Endothelial cell of umbilical vein (primary cell): ENCODE measurements at regions of chr13 and their contacts with region 1.

Region 1: DNA sequence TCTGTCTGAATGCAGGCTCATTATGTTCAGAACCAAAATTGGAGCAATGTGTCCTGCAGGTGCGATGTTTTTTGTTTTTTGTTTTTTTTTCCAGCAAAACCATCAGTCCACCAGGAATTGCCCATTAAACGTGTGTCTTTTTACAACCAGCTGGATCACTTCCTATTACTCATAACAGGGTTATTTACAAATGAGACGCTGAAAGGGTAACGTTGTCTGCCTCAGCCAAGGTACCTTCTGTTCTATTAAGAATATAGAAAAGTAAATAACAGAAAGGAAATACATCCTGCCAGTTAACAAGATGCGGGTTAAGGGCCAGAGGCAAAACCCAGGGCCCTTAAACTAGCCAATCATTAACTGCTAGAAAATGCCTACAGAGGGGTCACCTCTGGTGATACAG is 590.4 kb downstream of the TBC1D4 start:
- DNase-seq: peak; percentile 86
- H3K4me3 ChIP-seq: peak overlapping the region in 1 of 3 experiments; percentile 3
- H3K27ac ChIP-seq: peak overlapping the region; percentile 92
- H3K4me1 ChIP-seq: peaks cover 19% of the 10 kb centered on the region
- H3K27me3 ChIP-seq: no peaks in the 10 kb centered on the region
- CTCF ChIP-seq: no peak
- POLR2A ChIP-seq: no peak

Region 2: GRCh38 chr13:74683411-74683810 is 208.2 kb before region 1 on chr13:
- CTCF ChIA-PET with region 1: no interaction called
- POLR2A ChIA-PET with region 1: no interaction called
- dilution Hi-C with region 1: no loop called
- intact Hi-C with region 1: loop called (anchors 5 kb)
- DNase-seq: peak; percentile 19
- H3K4me3 ChIP-seq: no peak overlapping the region
- H3K27ac ChIP-seq: no peak overlapping the region
- H3K4me1 ChIP-seq: peaks cover 4% of the 10 kb centered on the region
- H3K27me3 ChIP-seq: no peaks in the 10 kb centered on the region
- CTCF ChIP-seq: no peak
- POLR2A ChIP-seq: no peak

Region 3: DNA sequence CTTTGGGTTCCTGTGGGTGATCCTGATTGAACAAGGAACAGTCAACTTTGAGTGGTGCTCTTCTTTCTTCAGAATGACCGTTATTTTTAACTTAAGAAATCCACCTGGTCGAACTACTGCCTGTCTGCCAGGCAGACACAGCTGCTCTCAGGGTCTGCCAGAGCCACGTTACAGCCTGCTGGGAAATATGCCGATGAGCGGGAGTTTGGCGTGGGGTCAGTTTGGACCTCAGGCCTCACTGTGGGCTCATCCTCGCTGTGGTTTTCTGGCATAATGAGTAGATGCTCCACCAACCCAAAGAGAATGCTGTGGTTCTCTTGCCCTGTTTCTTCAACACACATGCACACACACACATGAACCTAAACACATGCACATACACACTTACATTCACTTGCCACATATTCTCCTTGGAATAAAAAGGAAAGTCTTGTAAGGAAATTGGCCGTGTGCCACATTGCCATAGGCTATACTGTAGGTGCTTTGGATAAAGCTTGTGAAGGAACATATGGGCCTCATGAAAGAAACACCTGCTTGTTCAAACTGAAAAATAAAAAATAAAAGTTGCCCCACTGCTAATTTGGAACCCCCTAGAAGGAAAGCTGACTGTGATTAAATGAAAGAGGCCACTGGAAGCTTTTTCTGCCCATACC is 158.7 kb before region 1 on chr13:
- CTCF ChIA-PET with region 1: no interaction called
- POLR2A ChIA-PET with region 1: no interaction called
- dilution Hi-C with region 1: no loop called
- intact Hi-C with region 1: loop called (anchors 5 kb)
- DNase-seq: no peak
- H3K4me3 ChIP-seq: no peak overlapping the region
- H3K27ac ChIP-seq: no peak overlapping the region
- H3K4me1 ChIP-seq: peaks cover 15% of the 10 kb centered on the region
- H3K27me3 ChIP-seq: no peaks in the 10 kb centered on the region
- CTCF ChIP-seq: no peak
- POLR2A ChIP-seq: no peak

Region 4: DNA sequence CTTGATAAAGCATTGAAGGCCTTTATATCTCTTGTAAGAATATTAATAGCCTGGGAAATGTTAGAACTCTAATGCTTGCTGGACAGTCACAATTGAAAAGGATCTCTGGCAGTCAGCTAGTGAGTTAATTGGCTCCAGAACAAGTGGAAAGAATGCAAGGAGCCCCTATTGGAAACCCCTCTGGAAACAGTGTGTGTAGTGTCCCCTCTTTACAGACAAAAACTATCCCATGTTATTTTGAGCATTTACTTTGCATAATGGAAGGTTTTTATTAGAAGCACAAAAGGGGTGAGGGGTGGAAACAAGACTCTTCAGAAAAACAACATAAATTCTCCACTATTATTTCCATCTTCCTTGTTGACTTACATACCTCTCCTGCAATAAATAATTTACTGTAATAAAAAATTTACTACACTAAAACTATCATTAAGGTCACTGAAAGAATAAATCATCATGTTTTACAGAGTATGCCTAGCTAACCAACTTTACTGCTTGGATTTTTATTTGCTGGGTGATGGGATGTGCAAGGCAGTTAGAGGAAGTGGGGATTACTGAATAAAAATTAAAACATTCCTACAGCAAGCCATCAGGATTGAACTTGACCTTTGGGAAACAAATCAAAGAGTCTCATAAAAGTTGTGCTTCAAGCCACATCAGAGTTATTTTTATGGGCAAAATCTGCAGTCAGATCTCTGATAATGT is 20.1 kb before region 1 on chr13:
- CTCF ChIA-PET with region 1: no interaction called
- POLR2A ChIA-PET with region 1: no interaction called
- dilution Hi-C with region 1: no loop called
- intact Hi-C with region 1: loop called (anchors 1 kb)
- DNase-seq: peak; percentile 54
- H3K4me3 ChIP-seq: no peak overlapping the region
- H3K27ac ChIP-seq: peak overlapping the region; percentile 37
- H3K4me1 ChIP-seq: peaks cover 32% of the 10 kb centered on the region
- H3K27me3 ChIP-seq: no peaks in the 10 kb centered on the region
- CTCF ChIP-seq: no peak
- POLR2A ChIP-seq: no peak

Region 5: DNA sequence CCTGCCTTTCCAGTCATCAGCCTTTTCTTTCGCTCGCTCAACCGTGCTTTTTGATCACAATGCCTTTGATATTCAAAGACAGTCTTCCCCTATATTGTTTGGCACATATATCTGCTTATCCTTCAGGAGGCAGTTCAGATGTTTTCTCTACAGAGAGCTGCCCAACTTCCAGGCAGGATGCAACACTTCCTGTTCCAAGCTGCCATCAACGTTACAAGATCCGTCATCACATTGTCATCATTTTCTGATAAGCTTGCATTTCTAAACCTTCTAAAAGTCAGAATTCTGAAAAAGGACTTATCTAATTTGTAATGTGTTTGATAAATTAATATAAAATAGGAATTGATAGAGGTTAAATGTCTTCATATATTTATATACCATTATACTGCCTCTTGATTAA is 16.2 kb after region 1 on chr13:
- CTCF ChIA-PET with region 1: interaction called, 6 read pairs
- POLR2A ChIA-PET with region 1: no interaction called
- dilution Hi-C with region 1: no loop called
- intact Hi-C with region 1: loop called (anchors 1 kb)
- DNase-seq: peak; percentile 68
- H3K4me3 ChIP-seq: no peak overlapping the region
- H3K27ac ChIP-seq: peak overlapping the region; percentile 45
- H3K4me1 ChIP-seq: peaks cover 23% of the 10 kb centered on the region
- H3K27me3 ChIP-seq: no peaks in the 10 kb centered on the region
- CTCF ChIP-seq: no peak
- POLR2A ChIP-seq: no peak

Region 6: GRCh38 chr13:75425216-75426009 is 533.8 kb after region 1 on chr13:
- CTCF ChIA-PET with region 1: no interaction called
- POLR2A ChIA-PET with region 1: no interaction called
- dilution Hi-C with region 1: no loop called
- intact Hi-C with region 1: no loop called
- DNase-seq: no peak
- H3K4me3 ChIP-seq: no peak overlapping the region
- H3K27ac ChIP-seq: no peak overlapping the region
- H3K4me1 ChIP-seq: no peaks in the 10 kb centered on the region
- H3K27me3 ChIP-seq: no peaks in the 10 kb centered on the region
- CTCF ChIP-seq: no peak
- POLR2A ChIP-seq: no peak